ENCODE measurements at regions of chr4 and their contacts with region 1.

Region 1: DNA sequence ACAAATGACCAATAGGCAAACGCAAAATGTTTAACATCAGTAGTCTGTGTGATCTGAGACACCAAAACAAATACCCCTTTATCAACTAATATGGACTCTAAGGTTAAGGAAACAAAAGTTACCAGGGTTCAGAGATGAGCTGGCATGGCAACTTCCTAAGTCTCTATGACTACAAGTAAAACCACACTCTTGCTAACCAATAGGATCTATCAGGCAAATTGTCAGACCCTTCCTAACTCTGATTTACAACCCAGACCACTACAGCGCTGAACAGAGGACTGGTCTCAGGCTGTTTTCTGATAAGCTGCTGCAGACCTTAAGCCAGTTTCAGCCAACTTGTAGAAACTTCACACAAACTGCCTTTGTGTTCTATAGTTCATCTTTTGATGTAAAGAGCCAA is 608.0 kb downstream of the TLL1 start:
- DNase-seq: no peak
- H3K4me3 ChIP-seq: no peak overlapping the region
- H3K27ac ChIP-seq: no peak overlapping the region
- H3K4me1 ChIP-seq: no peaks in the 10 kb centered on the region
- H3K27me3 ChIP-seq: no peaks in the 10 kb centered on the region
- CTCF ChIP-seq: no peak
- POLR2A ChIP-seq: no peak

Region 2: GRCh38 chr4:166021617-166022016 is 459.4 kb before region 1 on chr4:
- intact Hi-C with region 1: loop called (anchors 5 kb)
- DNase-seq: no peak
- H3K4me3 ChIP-seq: no peak overlapping the region
- H3K27ac ChIP-seq: no peak overlapping the region
- H3K4me1 ChIP-seq: no peaks in the 10 kb centered on the region
- H3K27me3 ChIP-seq: no peaks in the 10 kb centered on the region
- CTCF ChIP-seq: no peak
- POLR2A ChIP-seq: no peak

Region 3: DNA sequence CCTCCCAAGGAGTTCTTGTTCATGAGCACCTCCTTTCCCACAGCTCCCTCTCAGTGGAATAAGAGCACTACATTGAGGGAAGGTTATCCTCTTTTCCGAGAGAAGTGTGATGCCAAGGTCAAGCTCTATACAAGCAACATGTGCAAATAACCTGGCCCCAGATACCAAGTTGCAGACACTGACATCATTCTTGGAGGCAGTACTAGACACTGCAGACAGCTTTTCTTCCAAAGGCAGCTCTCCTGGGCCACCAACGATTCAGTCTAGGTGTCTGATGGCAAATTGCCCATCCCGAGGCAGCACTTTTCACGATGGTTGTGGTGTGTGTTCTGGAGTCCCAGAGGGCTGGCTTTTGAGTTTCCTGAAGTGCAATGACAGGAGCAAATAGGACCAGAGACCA is 223.2 kb before region 1 on chr4:
- intact Hi-C with region 1: loop called (anchors 5 kb)
- DNase-seq: no peak
- H3K4me3 ChIP-seq: no peak overlapping the region
- H3K27ac ChIP-seq: no peak overlapping the region
- H3K4me1 ChIP-seq: no peaks in the 10 kb centered on the region
- H3K27me3 ChIP-seq: no peaks in the 10 kb centered on the region
- CTCF ChIP-seq: no peak
- POLR2A ChIP-seq: no peak

Region 4: DNA sequence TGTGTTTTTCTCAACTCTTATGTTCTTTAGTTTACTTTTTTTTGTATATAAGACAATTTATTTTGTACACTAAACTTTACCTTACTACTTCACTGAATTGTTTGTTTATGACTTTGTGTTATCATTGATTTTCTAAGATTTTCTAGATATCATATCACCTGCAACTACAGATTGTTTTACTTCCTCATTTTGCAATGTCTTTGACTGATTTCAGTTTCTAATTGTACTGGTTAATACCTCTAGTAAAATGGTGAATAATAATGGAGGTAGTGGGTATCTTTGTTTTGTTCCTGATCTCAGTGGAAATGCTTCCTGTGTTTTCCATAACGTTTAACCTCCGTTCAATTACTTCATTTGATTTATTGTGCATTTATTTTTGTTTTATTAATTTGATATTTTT is 117.9 kb before region 1 on chr4:
- intact Hi-C with region 1: no loop called
- DNase-seq: no peak
- H3K4me3 ChIP-seq: no peak overlapping the region
- H3K27ac ChIP-seq: no peak overlapping the region
- H3K4me1 ChIP-seq: no peaks in the 10 kb centered on the region
- H3K27me3 ChIP-seq: no peaks in the 10 kb centered on the region
- CTCF ChIP-seq: no peak
- POLR2A ChIP-seq: no peak

Region 5: DNA sequence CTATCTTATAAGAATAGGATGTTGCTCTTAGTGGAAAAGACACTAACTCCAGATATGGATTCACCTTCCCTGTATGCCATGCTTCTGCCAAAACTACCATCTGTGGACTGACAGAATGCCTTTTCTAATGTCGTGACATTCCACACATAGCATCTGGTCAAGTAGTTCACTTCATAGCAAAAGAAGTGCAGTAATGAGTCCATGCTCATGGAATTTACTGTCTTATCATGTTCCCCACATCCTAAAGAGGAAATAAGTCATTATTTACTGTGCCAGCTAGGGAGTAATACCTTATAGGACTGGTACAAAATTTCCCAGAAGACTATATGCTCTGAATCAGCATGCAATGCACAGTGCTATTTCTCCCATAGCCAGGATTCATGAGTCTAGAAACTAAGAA is 45.6 kb before region 1 on chr4:
- intact Hi-C with region 1: no loop called
- DNase-seq: no peak
- H3K4me3 ChIP-seq: no peak overlapping the region
- H3K27ac ChIP-seq: no peak overlapping the region
- H3K4me1 ChIP-seq: no peaks in the 10 kb centered on the region
- H3K27me3 ChIP-seq: no peaks in the 10 kb centered on the region
- CTCF ChIP-seq: no peak
- POLR2A ChIP-seq: no peak

Region 6: DNA sequence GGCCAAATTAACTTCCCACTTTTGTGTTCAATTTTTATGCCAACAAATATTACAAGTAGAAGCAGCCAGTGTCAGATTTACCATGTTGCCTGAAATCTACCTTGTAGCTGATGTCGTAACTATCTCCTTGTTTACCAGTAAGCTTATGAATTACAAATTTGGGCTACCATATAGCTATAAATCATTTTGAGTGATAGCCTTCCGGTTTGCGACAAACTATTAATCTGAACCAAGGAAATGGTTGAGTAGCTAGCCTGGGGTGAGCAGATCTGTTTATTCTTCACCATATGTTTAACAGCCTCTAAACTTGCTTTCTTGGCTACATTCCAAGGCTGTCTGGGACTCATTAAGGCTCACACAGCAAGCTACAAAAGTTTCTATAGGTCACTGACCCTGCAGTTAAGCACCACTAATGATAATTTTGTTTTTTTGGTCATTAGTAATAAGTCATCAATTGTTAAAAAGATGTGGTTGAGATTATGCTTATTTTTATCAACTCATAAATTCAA is 971.9 kb after region 1 on chr4:
- intact Hi-C with region 1: no loop called
- DNase-seq: no peak
- H3K4me3 ChIP-seq: no peak overlapping the region
- H3K27ac ChIP-seq: no peak overlapping the region
- H3K4me1 ChIP-seq: no peaks in the 10 kb centered on the region
- H3K27me3 ChIP-seq: no peaks in the 10 kb centered on the region
- CTCF ChIP-seq: no peak
- POLR2A ChIP-seq: no peak

Measured in breast epithelium (tissue), 4 donors.